ENCODE measurements at regions of chr1 and their contacts with region 1.

Region 1: DNA sequence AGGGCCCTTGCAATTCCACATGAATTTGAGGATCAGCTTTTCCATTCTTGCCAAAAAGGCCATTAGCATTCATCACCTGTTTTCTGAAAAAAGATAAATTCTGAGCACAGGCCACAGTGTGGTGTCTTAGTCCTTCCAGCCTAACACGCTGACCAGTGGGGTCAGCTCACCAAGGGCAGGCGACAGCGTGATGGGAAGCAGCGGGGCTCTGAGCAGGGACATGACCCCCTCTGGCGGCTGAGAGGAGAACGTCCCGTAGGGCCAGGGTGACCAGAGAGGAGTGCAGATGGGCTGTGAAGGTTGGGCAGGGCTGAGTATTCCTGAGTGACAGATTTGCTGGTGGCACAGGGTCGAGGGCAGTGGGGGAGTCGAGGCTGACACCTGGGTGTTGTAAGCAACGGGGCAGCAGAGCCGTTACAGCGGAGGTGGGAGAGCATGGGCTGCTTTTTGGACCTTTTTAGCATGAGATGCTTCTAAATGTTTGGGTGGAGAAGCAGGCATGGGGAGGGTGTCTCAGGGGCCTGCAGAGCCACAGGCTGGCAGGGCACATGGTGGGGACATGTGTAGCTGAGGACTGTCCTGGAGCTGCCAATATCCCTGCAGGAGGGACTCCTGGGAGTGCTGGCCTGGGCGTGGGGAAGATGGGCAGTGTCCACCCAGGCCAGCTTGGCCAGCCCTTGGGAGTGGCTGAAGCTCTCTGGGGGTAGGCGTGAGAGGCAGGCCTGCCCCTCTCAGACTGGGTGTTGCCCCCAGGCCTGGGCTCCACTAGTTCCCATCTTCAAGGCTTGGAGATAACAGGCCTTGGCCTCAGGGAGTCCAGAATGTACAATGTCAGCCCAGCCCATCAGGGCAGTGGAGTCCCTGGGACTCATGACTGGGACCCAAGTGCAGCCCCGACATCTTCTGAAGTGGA is 8.6 kb upstream of the CALML6 start:
- DNase-seq: peak; percentile 80
- ATAC-seq: peak; percentile 21
- H3K4me3 ChIP-seq: no peak overlapping the region
- H3K4me3 Mint-ChIP-seq: peak overlapping the region; percentile 66
- H3K27ac ChIP-seq: peak overlapping the region in 1 of 2 donors; percentile 30
- H3K27ac Mint-ChIP-seq: peak overlapping the region; percentile 75
- H3K4me1 ChIP-seq: peaks cover 28 to 42% of the 10 kb centered on the region in 2 donors
- H3K4me1 Mint-ChIP-seq: peaks cover 33% of the 10 kb centered on the region
- H3K27me3 ChIP-seq: no peaks in the 10 kb centered on the region
- H3K27me3 Mint-ChIP-seq: no peaks in the 10 kb centered on the region
- CTCF ChIP-seq: peak; percentile 96

Region 2: DNA sequence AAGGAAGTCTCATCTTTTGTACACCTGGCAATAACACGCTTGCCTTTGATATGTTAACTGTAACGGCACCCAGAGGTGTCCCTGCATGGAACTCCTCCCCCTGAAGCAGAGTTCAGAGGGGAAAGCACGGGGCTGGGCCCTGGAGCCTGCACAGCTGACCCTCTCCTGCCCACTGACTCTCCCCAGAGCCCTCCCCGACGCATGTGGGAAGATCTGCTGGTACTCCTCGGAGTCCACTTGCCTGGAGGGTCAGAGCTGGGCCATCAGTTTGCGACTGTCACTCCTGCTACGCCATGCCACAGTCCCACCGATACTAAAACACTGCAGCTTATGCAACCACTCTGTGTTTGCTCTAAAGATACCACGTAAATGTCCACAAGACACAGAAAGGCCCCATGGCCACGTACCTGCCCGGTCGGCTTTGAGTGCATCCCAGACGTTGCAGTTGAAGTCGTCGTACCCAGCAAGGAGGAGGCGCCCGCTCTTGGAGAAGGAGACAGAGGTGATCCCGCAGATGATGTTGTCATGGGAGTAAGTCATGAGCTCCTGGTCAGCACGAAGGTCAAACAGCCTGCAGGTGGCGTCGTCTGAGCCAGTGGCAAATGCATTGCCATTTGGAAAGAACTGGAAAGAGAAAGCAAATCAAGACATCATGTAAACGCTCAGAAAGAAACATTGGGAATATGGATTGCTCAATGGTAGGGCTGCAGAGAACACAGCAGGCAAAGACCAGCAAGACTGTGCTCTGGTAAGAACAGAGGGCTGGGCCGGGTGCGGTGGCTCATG is 117.6 kb before region 1 on chr1:
- CTCF ChIA-PET with region 1: interaction called, 15 read pairs
- POLR2A ChIA-PET with region 1: no interaction called
- intact Hi-C with region 1: no loop called
- DNase-seq: no peak
- ATAC-seq: no peak
- H3K4me3 ChIP-seq: no peak overlapping the region
- H3K4me3 Mint-ChIP-seq: no peak overlapping the region
- H3K27ac ChIP-seq: no peak overlapping the region
- H3K27ac Mint-ChIP-seq: peak overlapping the region; percentile 34
- H3K4me1 ChIP-seq: no peaks in the 10 kb centered on the region
- H3K4me1 Mint-ChIP-seq: peaks cover 8% of the 10 kb centered on the region
- H3K27me3 ChIP-seq: no peaks in the 10 kb centered on the region
- H3K27me3 Mint-ChIP-seq: no peaks in the 10 kb centered on the region
- CTCF ChIP-seq: no peak

Region 3: GRCh38 chr1:1847061-1847850 is 59.2 kb before region 1 on chr1:
- CTCF ChIA-PET with region 1: interaction called, 3 read pairs
- POLR2A ChIA-PET with region 1: interaction called, 11 read pairs
- intact Hi-C with region 1: loop called (anchors 5 kb)
- DNase-seq: no peak
- ATAC-seq: no peak
- H3K4me3 ChIP-seq: no peak overlapping the region
- H3K4me3 Mint-ChIP-seq: peak overlapping the region; percentile 55
- H3K27ac ChIP-seq: peak overlapping the region; percentile 11 to 68
- H3K27ac Mint-ChIP-seq: peak overlapping the region; percentile 84
- H3K4me1 ChIP-seq: peaks cover 42 to 61% of the 10 kb centered on the region in 2 donors
- H3K4me1 Mint-ChIP-seq: peaks cover 68% of the 10 kb centered on the region
- H3K27me3 ChIP-seq: no peaks in the 10 kb centered on the region
- H3K27me3 Mint-ChIP-seq: no peaks in the 10 kb centered on the region
- CTCF ChIP-seq: no peak

Region 4: DNA sequence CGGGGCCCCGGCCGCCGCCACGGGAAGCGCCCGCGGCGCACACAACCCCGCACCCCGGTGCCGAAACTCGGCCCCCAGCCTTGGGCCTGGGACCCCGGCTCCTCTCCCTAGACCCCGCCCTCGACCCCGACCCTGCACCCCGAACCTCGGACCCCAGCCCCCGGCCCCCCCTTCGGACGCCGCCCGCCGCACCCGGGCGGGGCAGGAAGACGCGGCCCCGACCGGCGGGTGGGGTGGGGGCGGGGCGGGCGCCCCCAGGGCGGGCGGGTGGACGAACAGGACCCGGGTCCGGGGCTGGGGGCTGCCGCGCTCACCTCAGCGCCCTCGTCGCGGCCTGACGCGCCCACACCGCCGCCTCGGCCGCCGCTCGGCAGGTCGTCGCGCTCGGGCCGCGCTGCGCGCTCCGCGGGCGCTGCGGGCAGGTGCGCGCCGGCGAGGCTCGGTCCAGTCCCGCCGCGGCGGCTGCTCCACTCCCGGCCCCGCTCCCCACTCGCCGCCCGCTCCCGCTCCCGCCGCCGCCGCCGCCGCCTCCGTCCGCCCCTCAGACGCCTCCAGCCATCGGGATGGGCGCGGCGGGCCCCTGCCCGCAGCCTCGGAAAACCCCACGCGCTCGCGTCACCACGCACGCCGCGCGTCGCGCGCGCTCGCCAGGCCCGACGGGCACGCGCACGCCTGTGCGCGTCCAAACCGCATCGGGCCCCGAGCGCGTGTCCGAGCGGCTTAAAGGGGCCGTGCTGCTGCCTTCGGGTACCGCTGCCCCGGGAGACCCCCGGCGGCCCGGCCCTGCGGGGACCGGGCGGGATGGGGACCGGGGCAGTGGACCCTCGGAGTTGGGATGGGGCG is 15.7 kb before region 1 on chr1 and contains the start of gene GNB1:
- CTCF ChIA-PET with region 1: interaction called, 67 read pairs
- POLR2A ChIA-PET with region 1: interaction called, 7 read pairs
- intact Hi-C with region 1: loop called (anchors 1 kb)
- DNase-seq: peak; percentile 98
- ATAC-seq: peak; percentile 60
- H3K4me3 ChIP-seq: peak within 1 kb of the TSS; percentile 63 to 88 (median 79)
- H3K4me3 Mint-ChIP-seq: peak within 1 kb of the TSS; percentile 91
- H3K27ac ChIP-seq: peak within 1 kb of the TSS; percentile 72 to 86
- H3K27ac Mint-ChIP-seq: peak within 1 kb of the TSS; percentile 96
- H3K4me1 ChIP-seq: peaks cover 53 to 74% of the 10 kb centered on the region in 2 donors
- H3K4me1 Mint-ChIP-seq: peaks cover 60% of the 10 kb centered on the region
- H3K27me3 ChIP-seq: no peaks in the 10 kb centered on the region
- H3K27me3 Mint-ChIP-seq: no peaks in the 10 kb centered on the region
- CTCF ChIP-seq: no peak
- total RNA-seq, gene GNB1: 249 and 291 TPM in 2 replicates

Region 5: DNA sequence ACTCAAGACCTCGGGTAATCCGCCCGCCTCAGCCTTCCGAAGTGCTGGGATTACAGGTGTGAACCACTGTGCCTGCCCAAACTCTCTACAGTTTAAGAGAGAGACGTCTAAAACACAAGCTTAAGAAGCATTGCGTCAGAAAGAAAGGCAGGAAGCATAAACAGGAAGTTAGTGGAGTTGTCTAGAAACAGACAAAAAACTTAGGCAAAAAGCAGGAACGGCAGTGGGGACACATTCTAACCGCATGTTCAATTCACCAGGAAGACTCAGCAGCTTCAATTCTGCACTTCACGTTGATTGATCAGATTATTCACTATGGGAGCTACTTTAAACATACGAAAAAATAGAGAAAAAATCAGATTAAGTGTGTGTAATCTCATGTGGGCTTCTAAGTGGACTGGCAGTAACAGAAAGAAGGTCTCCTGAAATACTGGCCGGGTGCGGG is 89.8 kb after region 1 on chr1:
- CTCF ChIA-PET with region 1: no interaction called
- POLR2A ChIA-PET with region 1: no interaction called
- intact Hi-C with region 1: no loop called
- DNase-seq: no peak
- ATAC-seq: no peak
- H3K4me3 ChIP-seq: no peak overlapping the region
- H3K4me3 Mint-ChIP-seq: no peak overlapping the region
- H3K27ac ChIP-seq: no peak overlapping the region
- H3K27ac Mint-ChIP-seq: no peak overlapping the region
- H3K4me1 ChIP-seq: no peaks in the 10 kb centered on the region
- H3K4me1 Mint-ChIP-seq: no peaks in the 10 kb centered on the region
- H3K27me3 ChIP-seq: peaks cover 0 to 14% (median 2%) of the 10 kb centered on the region in 4 experiments
- H3K27me3 Mint-ChIP-seq: peaks cover 32% of the 10 kb centered on the region
- CTCF ChIP-seq: no peak

Region 6: GRCh38 chr1:2044510-2045319 is 138.3 kb after region 1 on chr1:
- CTCF ChIA-PET with region 1: interaction called, 6 read pairs
- POLR2A ChIA-PET with region 1: no interaction called
- intact Hi-C with region 1: loop called (anchors 2 kb)
- DNase-seq: peak; percentile 86
- ATAC-seq: peak; percentile 84
- H3K4me3 ChIP-seq: peak overlapping the region in 3 of 5 experiments; percentile 29 to 47 (median 35)
- H3K4me3 Mint-ChIP-seq: peak overlapping the region; percentile 67
- H3K27ac ChIP-seq: no peak overlapping the region
- H3K27ac Mint-ChIP-seq: no peak overlapping the region
- H3K4me1 ChIP-seq: peaks cover 19 to 26% of the 10 kb centered on the region in 2 donors
- H3K4me1 Mint-ChIP-seq: peaks cover 27% of the 10 kb centered on the region
- H3K27me3 ChIP-seq: peaks cover 0 to 39% (median 15%) of the 10 kb centered on the region in 4 experiments
- H3K27me3 Mint-ChIP-seq: peaks cover 14% of the 10 kb centered on the region
- CTCF ChIP-seq: peak; percentile 90

Region 7: DNA sequence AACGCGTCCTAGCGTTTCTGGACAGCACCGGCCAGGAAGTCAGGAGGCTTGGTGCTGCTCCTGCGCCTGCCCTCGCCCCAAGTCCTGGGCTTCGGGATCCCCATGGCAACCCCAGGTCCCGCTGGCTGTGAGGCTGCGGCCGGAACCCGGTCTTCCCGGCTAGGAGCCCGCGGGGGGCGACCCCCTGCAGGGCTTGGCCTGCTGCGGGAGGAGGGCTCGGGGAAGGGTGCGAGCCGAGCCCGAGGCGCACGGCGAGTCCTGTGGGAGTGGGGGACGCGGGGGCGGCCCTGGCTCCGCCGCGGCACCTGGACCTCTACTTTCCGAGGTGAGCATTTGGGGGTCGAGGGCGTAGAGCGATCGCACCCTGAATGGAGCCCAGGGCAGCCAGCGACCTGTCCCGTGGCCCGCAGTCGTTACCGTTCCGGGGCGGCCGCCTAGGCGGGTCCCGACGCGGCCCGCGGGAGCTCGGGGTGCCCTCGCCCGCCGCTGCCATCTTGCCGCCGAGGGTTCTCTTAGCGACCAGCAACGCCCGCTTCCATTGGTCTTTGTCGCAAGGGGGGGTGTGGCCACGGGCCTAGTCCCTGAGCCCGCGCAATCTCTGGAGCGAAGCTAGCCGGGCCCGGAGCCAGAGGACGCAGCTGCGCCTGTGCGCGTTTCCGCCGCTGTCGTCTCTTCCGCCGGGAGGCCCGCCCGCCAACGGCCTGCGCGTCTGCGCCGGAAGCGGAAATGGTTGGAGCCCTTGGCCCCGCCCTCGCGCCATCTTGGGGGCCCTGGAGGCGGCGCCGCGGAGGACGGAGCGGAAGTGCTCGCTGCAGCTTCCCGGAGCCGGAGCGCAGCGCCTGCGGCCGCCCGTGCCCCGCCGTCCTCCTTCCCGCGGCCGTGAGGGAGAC is 484.8 kb after region 1 on chr1 and contains the starts of genes MORN1 and RER1:
- CTCF ChIA-PET with region 1: no interaction called
- POLR2A ChIA-PET with region 1: no interaction called
- intact Hi-C with region 1: loop called (anchors 2 kb)
- DNase-seq: peak; percentile 99
- ATAC-seq: peak; percentile 94
- H3K4me3 ChIP-seq: peak within 1 kb of the TSS; percentile 61 to 92 (median 76)
- H3K4me3 Mint-ChIP-seq: peak within 1 kb of the TSS; percentile 92
- H3K27ac ChIP-seq: peak within 1 kb of the TSS; percentile 24 to 88
- H3K27ac Mint-ChIP-seq: peak within 1 kb of the TSS; percentile 88
- H3K4me1 ChIP-seq: peaks cover 25 to 47% of the 10 kb centered on the region in 2 donors
- H3K4me1 Mint-ChIP-seq: peaks cover 47% of the 10 kb centered on the region
- H3K27me3 ChIP-seq: no peaks in the 10 kb centered on the region
- H3K27me3 Mint-ChIP-seq: no peaks in the 10 kb centered on the region
- CTCF ChIP-seq: no peak
- total RNA-seq, gene MORN1: 30.4 and 32.6 TPM in 2 replicates
- total RNA-seq, gene RER1: 117 and 118 TPM in 2 replicates